MCF 10A (cell line): ENCODE measurements at regions of chr22 and their contacts with region 1.

Region 1: DNA sequence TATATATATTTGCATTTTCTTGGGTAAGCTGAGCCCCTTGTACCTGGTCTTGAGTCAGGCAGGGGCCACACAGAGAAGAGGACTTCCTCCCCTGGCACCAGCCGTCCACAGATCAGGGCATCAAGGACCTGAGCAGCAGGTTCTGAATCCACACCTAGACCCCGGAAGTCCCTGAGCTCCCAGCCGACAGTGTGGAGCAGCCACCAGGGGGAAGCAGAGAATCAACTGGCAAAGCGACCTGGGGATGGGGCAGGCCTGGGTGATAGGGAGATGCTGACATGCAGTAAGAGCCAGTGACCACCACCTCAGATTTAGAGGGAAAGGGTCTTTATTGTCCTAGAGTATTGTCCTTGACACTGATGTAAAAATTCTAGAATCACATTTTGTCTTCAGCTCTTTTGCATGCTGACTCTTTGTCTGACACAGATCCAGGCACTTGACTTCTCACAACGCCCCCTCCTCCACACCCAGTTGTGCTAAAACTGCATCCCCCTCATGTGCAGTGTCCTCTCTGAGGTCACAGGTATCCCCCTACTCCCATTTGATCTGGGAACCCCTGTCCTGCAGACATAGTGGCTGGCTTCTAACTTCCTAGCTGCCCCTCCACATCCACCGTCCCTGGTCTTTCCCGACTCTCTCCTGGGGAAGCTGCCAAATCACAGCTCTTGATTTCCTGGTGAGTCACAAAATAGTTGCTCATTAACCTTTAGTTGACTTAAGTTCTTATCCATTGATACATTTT is 109.3 kb downstream of the GGTLC2 start:
- DNase-seq: peak; percentile 72
- H3K4me3 Mint-ChIP-seq: no peak overlapping the region
- H3K27ac Mint-ChIP-seq: no peak overlapping the region
- H3K4me1 Mint-ChIP-seq: peaks cover 27% of the 10 kb centered on the region
- H3K27me3 Mint-ChIP-seq: no peaks in the 10 kb centered on the region
- CTCF ChIP-seq: peak; percentile 69

Region 2: GRCh38 chr22:22498267-22498666 is 255.4 kb before region 1 on chr22:
- CTCF ChIA-PET with region 1: no interaction called
- POLR2A ChIA-PET with region 1: no interaction called
- intact Hi-C with region 1: no loop called
- DNase-seq: no peak
- H3K4me3 Mint-ChIP-seq: no peak overlapping the region
- H3K27ac Mint-ChIP-seq: no peak overlapping the region
- H3K4me1 Mint-ChIP-seq: no peaks in the 10 kb centered on the region
- H3K27me3 Mint-ChIP-seq: peaks cover 61% of the 10 kb centered on the region
- CTCF ChIP-seq: no peak

Region 3: GRCh38 chr22:22770280-22770871 is 16.7 kb after region 1 on chr22:
- CTCF ChIA-PET with region 1: interaction called, 13 read pairs
- POLR2A ChIA-PET with region 1: interaction called, 3 read pairs
- intact Hi-C with region 1: no loop called
- DNase-seq: peak; percentile 69
- H3K4me3 Mint-ChIP-seq: no peak overlapping the region
- H3K27ac Mint-ChIP-seq: no peak overlapping the region
- H3K4me1 Mint-ChIP-seq: no peaks in the 10 kb centered on the region
- H3K27me3 Mint-ChIP-seq: peaks cover 96% of the 10 kb centered on the region
- CTCF ChIP-seq: peak; percentile 86